Activated CD4-positive, alpha-beta T cell treated with anti-CD3 and anti-CD28 coated beads for 36 hours (primary cell): ENCODE measurements at regions of chr17 and their contacts with region 1.

Region 1: DNA sequence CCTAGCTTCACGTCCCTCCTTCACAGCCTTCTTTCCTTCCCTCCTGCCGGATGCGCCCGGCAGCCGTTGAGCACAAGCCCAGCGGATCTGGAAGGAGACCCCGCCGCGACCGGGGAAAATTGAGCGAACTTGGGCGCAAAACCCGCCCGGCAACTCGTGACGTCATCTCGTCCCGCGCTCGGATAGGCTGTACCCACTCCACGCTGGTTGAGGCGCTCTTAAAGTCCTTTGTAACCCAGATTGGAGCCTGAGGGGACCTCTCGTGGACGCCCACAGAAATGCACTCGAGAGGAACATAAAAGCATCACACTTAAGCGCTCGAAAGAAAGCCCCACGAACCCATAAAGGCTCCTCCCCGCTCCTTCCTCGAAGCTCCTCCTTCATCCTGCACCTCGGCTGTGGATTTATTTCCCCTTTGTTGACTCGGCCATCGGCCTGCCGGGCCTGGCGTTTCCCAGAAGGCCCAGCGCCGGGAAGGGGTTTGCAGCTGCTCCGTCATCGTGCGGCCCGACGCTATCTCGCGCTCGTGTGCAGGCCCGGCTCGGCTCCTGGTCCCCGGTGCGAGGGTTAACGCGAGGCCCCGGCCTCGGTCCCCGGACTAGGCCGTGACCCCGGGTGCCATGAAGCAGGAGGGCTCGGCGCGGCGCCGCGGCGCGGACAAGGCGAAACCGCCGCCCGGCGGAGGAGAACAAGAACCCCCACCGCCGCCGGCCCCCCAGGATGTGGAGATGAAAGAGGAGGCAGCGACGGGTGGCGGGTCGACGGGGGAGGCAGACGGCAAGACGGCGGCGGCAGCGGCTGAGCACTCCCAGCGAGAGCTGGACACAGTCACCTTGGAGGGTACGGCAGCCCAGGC is at the start of gene PSMD3:
- DNase-seq: peak; percentile 99
- ATAC-seq: peak; percentile 98
- H3K4me3 Mint-ChIP-seq: peak within 1 kb of the TSS; percentile 94
- H3K27ac Mint-ChIP-seq: peak within 1 kb of the TSS; percentile 90
- H3K4me1 Mint-ChIP-seq: peaks cover 31% of the 10 kb centered on the region
- H3K27me3 Mint-ChIP-seq: peaks cover 4% of the 10 kb centered on the region
- total RNA-seq, gene PSMD3: 141 to 146 TPM

Region 2: DNA sequence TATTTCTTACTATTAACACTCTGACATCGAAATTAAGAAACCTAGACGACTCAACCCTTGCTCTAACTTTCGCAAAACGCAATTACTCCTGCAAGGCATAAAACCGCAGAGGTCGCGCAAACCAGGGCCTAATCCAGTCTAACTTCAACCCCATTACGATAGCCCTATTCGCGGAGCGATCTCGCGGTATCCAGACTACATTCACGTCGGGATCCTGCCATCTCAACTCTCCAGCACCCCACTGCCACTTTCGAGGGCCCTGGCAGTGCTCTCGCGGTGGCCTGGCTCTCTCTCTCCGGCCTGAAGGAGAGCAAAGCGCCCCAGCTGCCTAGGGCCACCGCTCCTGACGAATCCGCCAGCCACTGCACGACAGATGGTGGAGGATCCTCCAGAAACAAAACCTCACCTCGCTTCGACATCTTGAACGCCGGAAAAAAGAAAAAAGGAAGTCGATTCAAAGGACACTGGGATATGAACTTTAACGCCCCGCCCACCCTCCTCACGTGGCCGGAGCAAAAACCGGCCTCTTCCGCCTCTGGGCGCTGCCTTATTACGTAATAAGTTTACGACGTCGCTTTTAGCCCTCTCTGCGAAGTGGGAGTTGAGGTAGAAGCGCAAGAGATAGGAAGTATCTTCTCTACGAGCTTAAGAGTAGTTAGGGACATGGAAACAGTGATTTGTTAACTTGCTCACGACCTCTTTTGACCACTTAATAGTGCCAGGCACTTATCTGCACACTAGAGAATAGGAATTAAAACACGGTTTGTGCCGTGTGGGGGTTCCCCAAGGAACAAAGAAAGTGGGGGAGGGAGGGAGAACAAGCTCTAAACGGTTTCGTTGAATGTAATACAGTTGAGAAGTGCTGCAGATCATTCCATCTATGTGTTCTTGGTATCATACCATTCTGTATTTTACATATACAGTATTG is 1127.0 kb before region 1 on chr17 and contains the start of gene RPL23:
- CTCF ChIA-PET with region 1: no interaction called
- POLR2A ChIA-PET with region 1: no interaction called
- intact Hi-C with region 1: loop called in 1 of 2 experiments (anchors 1 kb)
- DNase-seq: peak; percentile 96
- ATAC-seq: peak; percentile 87
- H3K4me3 Mint-ChIP-seq: peak within 1 kb of the TSS; percentile 99
- H3K27ac Mint-ChIP-seq: peak within 1 kb of the TSS; percentile 99
- H3K4me1 Mint-ChIP-seq: peaks cover 46% of the 10 kb centered on the region
- H3K27me3 Mint-ChIP-seq: no peaks in the 10 kb centered on the region
- total RNA-seq, gene RPL23: 1,886 to 1,896 TPM

Region 3: GRCh38 chr17:39527220-39527813 is 453.3 kb before region 1 on chr17:
- CTCF ChIA-PET with region 1: no interaction called
- POLR2A ChIA-PET with region 1: no interaction called
- intact Hi-C with region 1: no loop called
- DNase-seq: no peak
- ATAC-seq: no peak
- H3K4me3 Mint-ChIP-seq: no peak overlapping the region
- H3K27ac Mint-ChIP-seq: no peak overlapping the region
- H3K4me1 Mint-ChIP-seq: peaks cover 14% of the 10 kb centered on the region
- H3K27me3 Mint-ChIP-seq: no peaks in the 10 kb centered on the region

Region 4: DNA sequence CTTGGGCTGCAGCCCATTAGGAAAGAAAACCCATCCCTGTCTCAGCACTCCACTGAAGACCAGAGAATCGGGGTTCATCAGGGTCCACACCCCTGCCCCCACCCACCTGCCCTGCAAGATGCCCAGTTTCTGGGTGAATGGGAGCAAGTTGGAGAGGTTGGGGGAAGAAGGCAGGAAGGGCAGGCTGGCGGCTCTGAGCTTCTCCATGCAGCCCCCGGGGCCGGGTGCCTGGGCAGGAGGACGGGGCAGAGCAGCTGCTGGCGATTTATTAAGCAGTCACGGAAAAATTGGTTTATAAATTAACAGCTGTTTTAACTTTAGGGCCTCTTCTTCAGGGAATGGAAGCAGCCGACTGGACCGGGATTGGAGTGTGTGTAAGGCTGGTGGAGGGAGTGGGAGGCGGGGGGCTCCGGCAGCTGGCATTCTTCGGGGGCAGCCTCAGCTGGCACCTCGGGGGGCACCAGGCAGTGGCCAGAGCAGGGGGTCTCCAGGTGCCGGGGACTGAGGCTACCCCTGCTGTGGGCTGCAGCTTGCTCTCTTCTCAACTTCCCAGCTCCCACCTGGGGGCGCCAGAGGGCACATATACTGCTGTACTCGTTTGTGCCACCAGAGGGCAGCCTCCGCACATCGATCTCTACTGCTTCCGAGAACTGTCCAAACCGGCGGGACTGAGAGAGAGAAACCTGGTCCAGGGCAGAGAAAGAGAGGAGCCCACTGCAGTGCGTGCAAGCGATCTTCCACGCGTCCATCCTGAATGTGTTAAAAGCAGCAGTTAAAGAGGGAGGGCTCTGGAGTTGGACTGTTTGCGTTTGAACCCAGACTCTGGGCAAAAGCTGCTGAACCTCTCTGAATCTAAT is 358.8 kb before region 1 on chr17:
- CTCF ChIA-PET with region 1: interaction called, 23 read pairs
- POLR2A ChIA-PET with region 1: interaction called, 5 read pairs
- intact Hi-C with region 1: loop called (anchors 1 kb)
- DNase-seq: peak; percentile 91
- ATAC-seq: peak; percentile 68
- H3K4me3 Mint-ChIP-seq: peak overlapping the region; percentile 62
- H3K27ac Mint-ChIP-seq: peak overlapping the region; percentile 91
- H3K4me1 Mint-ChIP-seq: peaks cover 26% of the 10 kb centered on the region
- H3K27me3 Mint-ChIP-seq: peaks cover 18% of the 10 kb centered on the region

Region 5: DNA sequence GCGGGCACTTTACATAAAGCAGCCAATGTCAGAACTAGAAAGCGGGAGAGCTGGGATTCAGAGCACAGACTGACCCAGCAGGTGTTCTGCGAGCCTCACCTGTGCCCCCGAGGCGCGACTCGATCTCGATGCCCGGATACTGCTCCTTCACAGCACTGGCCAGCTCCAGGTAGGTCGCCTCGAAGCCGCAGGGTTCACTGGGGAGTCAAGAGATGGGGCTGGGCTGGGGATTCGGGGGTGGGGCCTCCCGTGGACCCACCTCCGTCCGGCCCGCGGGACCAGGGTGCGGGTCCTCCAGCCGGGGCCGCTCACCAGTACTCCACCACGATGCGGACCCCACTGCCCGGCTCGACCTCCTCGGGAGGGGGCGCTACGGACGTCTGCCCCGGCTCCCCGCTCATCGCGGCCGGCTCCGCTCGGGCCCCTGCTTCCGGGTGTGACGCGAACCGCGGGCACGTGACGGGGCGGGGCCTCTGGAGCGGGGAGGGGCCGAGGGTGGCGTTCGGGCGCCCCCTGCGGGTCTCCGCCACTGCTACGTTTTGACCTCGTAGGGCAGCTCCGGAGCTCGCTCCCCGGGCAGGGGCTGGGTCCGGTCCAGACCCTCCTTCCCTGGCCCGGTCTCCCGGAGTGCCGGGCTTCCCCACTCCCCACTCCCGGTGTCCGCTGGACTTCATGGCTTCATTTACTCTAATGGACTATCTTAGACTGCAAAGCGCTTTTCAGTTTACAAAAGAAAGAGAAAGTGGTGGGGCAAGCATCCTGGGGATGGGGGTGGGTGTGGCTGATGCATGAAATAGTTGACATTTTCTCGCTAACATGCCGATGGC is 250.3 kb before region 1 on chr17 and contains the start of gene MIEN1:
- CTCF ChIA-PET with region 1: interaction called, 3 read pairs
- POLR2A ChIA-PET with region 1: no interaction called
- intact Hi-C with region 1: loop called in 1 of 2 experiments (anchors 1 kb)
- DNase-seq: peak; percentile 97
- ATAC-seq: peak; percentile 92
- H3K4me3 Mint-ChIP-seq: peak within 1 kb of the TSS; percentile 90
- H3K27ac Mint-ChIP-seq: peak within 1 kb of the TSS; percentile 88
- H3K4me1 Mint-ChIP-seq: peaks cover 15% of the 10 kb centered on the region
- H3K27me3 Mint-ChIP-seq: no peaks in the 10 kb centered on the region
- total RNA-seq, gene MIEN1: 32.5 to 39.4 TPM

Region 6: GRCh38 chr17:39863918-39864746 is 116.4 kb before region 1 on chr17 and contains the start of gene IKZF3:
- CTCF ChIA-PET with region 1: interaction called, 4 read pairs
- POLR2A ChIA-PET with region 1: no interaction called
- intact Hi-C with region 1: loop called (anchors 1 kb)
- DNase-seq: peak; percentile 93
- ATAC-seq: peak; percentile 75
- H3K4me3 Mint-ChIP-seq: peak within 1 kb of the TSS; percentile 98
- H3K27ac Mint-ChIP-seq: peak within 1 kb of the TSS; percentile 97
- H3K4me1 Mint-ChIP-seq: peaks cover 67% of the 10 kb centered on the region
- H3K27me3 Mint-ChIP-seq: no peaks in the 10 kb centered on the region
- total RNA-seq, gene IKZF3: 37.6 to 50.4 TPM

Region 7: GRCh38 chr17:39927101-39927928 is 53.3 kb before region 1 on chr17 and contains the starts of genes LRRC3C and ORMDL3:
- CTCF ChIA-PET with region 1: interaction called, 5 read pairs
- POLR2A ChIA-PET with region 1: interaction called, 4 read pairs
- intact Hi-C with region 1: loop called (anchors 1 kb)
- DNase-seq: peak; percentile 96
- ATAC-seq: peak; percentile 78
- H3K4me3 Mint-ChIP-seq: peak within 1 kb of the TSS; percentile 85
- H3K27ac Mint-ChIP-seq: peak within 1 kb of the TSS; percentile 95
- H3K4me1 Mint-ChIP-seq: peaks cover 56% of the 10 kb centered on the region
- H3K27me3 Mint-ChIP-seq: no peaks in the 10 kb centered on the region
- total RNA-seq, gene LRRC3C: not detected
- total RNA-seq, gene ORMDL3: 46.8 to 64.9 TPM

Region 8: GRCh38 chr17:40139566-40140058 is 159.0 kb after region 1 on chr17:
- CTCF ChIA-PET with region 1: no interaction called
- POLR2A ChIA-PET with region 1: no interaction called
- intact Hi-C with region 1: loop called in 1 of 2 experiments (anchors 1 kb)
- DNase-seq: no peak
- ATAC-seq: peak; percentile 5
- H3K4me3 Mint-ChIP-seq: peak overlapping the region; percentile 90
- H3K27ac Mint-ChIP-seq: peak overlapping the region; percentile 98
- H3K4me1 Mint-ChIP-seq: peaks cover 39% of the 10 kb centered on the region
- H3K27me3 Mint-ChIP-seq: no peaks in the 10 kb centered on the region